AG04450 (cell line): ENCODE measurements at regions of chr6 and their contacts with region 1.

Region 1: DNA sequence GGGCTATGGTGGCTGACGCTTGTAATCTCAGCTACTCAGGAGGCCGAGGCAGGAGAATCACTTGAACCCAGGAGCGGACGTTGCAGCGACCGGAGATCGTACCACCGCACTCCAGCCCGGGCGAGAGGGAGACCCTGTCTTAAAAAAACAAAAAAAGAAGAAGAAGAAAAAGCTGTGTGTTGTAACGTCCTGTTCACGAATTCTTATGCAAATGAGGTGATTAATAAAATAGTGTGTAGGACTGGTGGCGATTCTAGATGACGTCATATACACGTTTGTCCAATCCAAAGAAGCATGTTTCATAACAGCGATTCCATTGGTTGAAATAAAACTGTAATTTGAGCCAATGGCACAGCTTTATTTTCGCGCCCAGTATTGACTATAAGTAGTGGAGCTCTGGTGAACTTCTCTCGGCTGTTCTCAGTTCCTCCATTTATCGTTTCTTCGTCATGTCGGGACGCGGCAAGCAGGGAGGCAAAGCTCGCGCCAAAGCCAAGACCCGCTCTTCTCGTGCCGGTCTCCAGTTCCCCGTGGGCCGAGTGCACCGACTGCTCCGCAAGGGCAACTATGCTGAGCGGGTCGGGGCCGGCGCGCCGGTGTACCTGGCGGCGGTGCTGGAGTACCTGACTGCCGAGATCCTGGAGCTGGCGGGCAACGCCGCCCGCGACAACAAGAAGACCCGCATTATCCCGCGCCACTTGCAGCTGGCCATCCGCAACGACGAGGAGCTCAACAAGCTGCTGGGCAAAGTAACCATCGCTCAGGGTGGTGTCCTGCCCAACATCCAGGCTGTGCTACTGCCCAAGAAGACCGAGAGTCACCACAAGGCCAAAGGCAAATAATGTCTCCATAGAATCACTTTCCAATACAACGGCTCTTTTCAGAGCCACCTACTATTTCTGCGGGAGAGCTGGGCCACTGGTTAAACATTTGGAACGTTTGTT is 47.0 kb downstream of the OR2B2 start:
- DNase-seq: peak; percentile 94
- H3K4me3 ChIP-seq: peak overlapping the region; percentile 75
- H3K27ac ChIP-seq: peak overlapping the region; percentile 96
- H3K27me3 ChIP-seq: no peaks in the 10 kb centered on the region
- CTCF ChIP-seq: no peak

Region 2: GRCh38 chr6:26031595-26032339 is 1833.4 kb before region 1 on chr6:
- CTCF ChIA-PET with region 1: no interaction called
- POLR2A ChIA-PET with region 1: interaction called, 11 read pairs
- DNase-seq: peak; percentile 87
- H3K4me3 ChIP-seq: peak overlapping the region; percentile 68
- H3K27ac ChIP-seq: peak overlapping the region; percentile 92
- H3K27me3 ChIP-seq: no peaks in the 10 kb centered on the region
- CTCF ChIP-seq: peak; percentile 33

Region 3: GRCh38 chr6:27838058-27838944 is 26.9 kb before region 1 on chr6:
- CTCF ChIA-PET with region 1: interaction called, 5 read pairs
- POLR2A ChIA-PET with region 1: interaction called, 289 read pairs
- DNase-seq: peak; percentile 99
- H3K4me3 ChIP-seq: peak overlapping the region; percentile 83
- H3K27ac ChIP-seq: peak overlapping the region; percentile 100
- H3K27me3 ChIP-seq: no peaks in the 10 kb centered on the region
- CTCF ChIP-seq: no peak

Region 4: DNA sequence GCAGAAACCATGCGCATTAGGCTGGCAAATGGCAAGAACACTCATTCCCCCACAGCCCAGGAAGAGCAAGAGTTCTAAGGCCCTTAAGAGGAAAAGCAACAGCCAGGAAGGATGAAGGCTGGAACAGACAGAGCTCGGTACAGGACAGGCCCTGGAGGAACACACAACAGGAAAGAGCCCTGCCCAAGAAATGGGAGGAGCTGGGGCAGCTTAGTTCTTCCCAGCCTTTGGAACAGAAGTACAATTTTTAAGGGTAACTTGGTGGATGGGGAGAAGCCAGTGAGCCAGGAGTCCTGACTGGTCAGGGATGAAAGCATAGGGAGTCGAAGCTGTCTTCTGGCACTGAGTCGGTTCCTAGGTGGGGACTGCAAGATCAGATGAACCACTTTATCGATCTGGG is 14.7 kb after region 1 on chr6:
- CTCF ChIA-PET with region 1: no interaction called
- POLR2A ChIA-PET with region 1: no interaction called
- DNase-seq: no peak
- H3K4me3 ChIP-seq: no peak overlapping the region
- H3K27ac ChIP-seq: no peak overlapping the region
- H3K27me3 ChIP-seq: no peaks in the 10 kb centered on the region
- CTCF ChIP-seq: no peak